Activated CD4-positive, alpha-beta T cell treated with anti-CD3 and anti-CD28 coated beads for 36 hours (primary cell): ENCODE measurements at regions of chr10 and their contacts with region 1.

Region 1: GRCh38 chr10:46030091-46030937 is at the start of gene NCOA4:
- DNase-seq: peak; percentile 98
- ATAC-seq: peak; percentile 96
- H3K4me3 Mint-ChIP-seq: peak within 1 kb of the TSS; percentile 97
- H3K27ac Mint-ChIP-seq: peak within 1 kb of the TSS; percentile 97
- H3K4me1 Mint-ChIP-seq: peaks cover 46% of the 10 kb centered on the region
- H3K27me3 Mint-ChIP-seq: no peaks in the 10 kb centered on the region
- total RNA-seq, gene NCOA4: 84.3 to 97.4 TPM

Region 2: DNA sequence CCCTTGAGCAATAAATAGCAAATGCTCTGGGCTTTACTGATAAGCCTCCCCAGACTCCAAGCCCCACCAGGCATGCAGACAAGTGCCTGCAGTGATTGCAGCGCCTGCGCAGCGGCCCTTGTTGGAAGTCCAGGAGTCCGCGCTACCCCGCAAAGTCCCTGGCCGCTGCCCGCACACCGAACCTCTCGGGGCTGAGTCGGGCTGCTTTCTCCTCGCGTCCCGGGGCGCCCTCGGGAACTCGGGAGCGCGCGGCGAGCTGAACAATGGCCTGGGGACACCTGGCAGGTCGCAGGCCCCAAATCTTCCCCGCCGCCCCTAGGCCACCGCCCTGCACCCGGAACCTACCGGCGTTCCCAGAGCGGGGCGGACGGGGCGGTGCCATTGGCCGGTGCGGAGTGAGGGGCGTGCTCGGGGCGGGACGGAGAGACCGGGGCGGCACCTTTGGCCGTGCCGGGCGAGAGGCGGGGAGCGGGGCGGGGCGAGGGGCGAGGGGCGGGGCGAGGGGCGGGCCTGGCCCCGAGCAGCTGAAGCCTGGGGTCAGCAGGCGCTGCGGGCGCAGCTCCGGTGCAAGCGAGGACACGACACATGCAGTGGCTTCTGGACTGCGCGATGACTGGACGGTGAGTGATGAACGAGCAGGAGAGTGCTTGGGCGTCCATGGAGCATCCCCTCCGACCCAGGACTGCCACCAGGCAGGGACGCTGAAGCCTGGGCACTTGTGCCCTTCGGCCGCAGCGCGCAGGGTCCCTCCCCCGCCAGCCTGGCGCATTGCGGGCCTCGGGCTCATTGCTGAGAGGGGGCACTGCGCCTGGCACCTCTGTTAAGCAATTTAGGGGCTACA is 1070.8 kb before region 1 on chr10 and contains the start of gene RASSF4:
- CTCF ChIA-PET with region 1: no interaction called
- POLR2A ChIA-PET with region 1: no interaction called
- intact Hi-C with region 1: loop called in 1 of 2 experiments (anchors 2 kb)
- DNase-seq: peak; percentile 96
- ATAC-seq: peak; percentile 100
- H3K4me3 Mint-ChIP-seq: peak within 1 kb of the TSS; percentile 80
- H3K27ac Mint-ChIP-seq: peak within 1 kb of the TSS; percentile 70
- H3K4me1 Mint-ChIP-seq: peaks cover 19% of the 10 kb centered on the region
- H3K27me3 Mint-ChIP-seq: no peaks in the 10 kb centered on the region
- total RNA-seq, gene RASSF4: 1.0 to 1.3 TPM

Region 3: GRCh38 chr10:45249978-45250693 is 780.2 kb before region 1 on chr10:
- CTCF ChIA-PET with region 1: no interaction called
- POLR2A ChIA-PET with region 1: no interaction called
- intact Hi-C with region 1: loop called in 1 of 2 experiments (anchors 2 kb)
- DNase-seq: no peak
- ATAC-seq: peak; percentile 26
- H3K4me3 Mint-ChIP-seq: peak overlapping the region; percentile 22
- H3K27ac Mint-ChIP-seq: no peak overlapping the region
- H3K4me1 Mint-ChIP-seq: peaks cover 2% of the 10 kb centered on the region
- H3K27me3 Mint-ChIP-seq: peaks cover 3% of the 10 kb centered on the region

Region 4: DNA sequence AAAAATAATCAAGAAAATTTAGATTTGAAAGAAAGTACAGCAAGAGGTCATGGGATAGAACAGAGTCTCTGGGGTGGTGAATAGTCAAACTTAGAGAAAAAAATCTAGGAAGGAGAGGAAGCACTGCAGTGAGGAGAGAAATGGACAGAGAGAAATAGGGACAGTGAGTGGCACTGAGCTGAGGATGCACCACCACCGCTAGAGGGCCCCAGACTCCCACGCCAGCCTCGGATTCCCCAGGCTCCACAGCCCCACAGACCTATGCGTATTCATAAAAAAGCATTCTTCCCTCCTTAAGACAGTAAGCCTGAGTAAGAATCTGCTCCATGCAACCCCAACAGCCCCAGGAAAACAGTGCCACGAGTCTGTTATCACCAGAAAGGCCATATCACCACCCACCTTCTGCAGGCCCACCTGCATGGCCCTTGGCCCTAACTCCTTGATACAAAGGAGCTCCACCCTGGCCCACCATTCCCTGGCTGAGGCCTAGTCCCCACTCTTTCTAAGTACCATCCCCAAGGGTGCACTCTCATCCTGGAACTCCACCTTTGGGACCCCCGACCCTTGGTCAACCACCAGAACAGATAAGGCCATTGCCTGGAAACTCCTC is 565.3 kb before region 1 on chr10:
- CTCF ChIA-PET with region 1: no interaction called
- POLR2A ChIA-PET with region 1: no interaction called
- intact Hi-C with region 1: loop called in 1 of 2 experiments (anchors 5 kb)
- DNase-seq: peak; percentile 89
- ATAC-seq: peak; percentile 100
- H3K4me3 Mint-ChIP-seq: no peak overlapping the region
- H3K27ac Mint-ChIP-seq: no peak overlapping the region
- H3K4me1 Mint-ChIP-seq: peaks cover 11% of the 10 kb centered on the region
- H3K27me3 Mint-ChIP-seq: no peaks in the 10 kb centered on the region

Region 5: DNA sequence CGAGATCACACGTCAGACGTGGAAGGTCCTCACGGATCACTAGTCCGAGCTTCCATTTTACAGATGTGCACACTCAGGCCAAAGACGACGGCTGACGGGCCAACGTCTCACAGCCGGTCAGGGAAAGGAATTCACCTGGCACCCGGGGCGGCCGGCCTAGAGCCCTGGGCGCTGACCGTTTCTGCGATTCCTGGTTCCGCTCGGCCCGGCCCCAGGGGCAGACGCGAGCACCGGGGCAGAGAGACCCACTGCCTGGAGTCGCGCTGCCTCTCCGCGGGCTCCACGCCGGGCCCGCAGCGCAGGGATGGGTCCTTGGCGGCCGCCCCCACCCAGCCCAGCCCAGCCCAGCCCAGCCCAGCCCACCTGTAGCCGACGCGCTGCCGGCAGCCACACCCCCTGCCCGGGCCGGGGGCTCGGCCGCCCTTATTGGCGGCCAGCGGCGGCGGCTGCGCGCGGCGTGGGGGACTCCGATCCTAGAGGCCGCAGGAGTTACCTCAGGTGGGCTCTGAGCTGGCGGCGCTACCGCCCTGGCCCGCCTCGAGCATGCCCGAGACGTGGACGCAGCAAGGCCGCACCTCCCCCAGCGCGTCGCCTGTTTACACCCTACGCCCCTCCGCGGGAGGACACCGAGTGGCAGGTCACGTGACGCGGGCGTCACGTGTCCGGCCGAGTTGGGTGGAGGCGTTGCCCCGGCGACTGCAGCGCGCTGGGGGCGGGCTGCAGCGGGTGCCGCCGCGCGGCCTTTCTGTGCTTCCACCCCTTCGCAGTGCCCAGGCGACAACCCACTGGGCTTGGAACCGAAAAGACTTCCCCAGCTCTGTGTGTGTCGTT is 435.8 kb before region 1 on chr10:
- CTCF ChIA-PET with region 1: no interaction called
- POLR2A ChIA-PET with region 1: no interaction called
- intact Hi-C with region 1: loop called in 1 of 2 experiments (anchors 2 kb)
- DNase-seq: peak; percentile 94
- ATAC-seq: peak; percentile 93
- H3K4me3 Mint-ChIP-seq: peak overlapping the region; percentile 77
- H3K27ac Mint-ChIP-seq: peak overlapping the region; percentile 67
- H3K4me1 Mint-ChIP-seq: peaks cover 30% of the 10 kb centered on the region
- H3K27me3 Mint-ChIP-seq: peaks cover 5% of the 10 kb centered on the region

Region 6: DNA sequence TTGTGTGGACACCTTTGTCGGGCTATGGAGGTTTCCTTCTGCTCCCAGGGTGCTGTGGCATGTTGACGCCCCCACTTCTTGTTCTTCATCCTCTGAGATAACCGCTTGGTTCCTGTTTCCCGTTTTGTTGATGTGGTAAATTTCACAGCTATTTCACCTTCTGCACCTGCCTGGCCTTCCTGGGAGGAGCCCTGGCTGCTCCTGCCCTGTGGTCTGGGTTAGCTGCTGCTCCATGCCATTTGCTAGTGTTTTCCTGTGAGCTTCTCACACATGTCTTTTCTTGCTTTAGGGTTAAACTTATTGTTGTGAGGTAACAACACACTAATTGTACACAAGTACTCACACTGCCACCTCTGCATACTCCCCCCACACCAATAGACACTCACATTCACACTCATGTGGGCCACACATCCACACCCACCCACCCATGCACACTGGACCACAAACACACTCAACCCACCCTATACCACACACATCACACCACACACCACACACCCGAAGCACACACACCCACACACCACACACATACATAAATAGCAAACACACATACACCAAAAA is 62.3 kb after region 1 on chr10:
- CTCF ChIA-PET with region 1: interaction called, 8 read pairs
- POLR2A ChIA-PET with region 1: no interaction called
- intact Hi-C with region 1: loop called (anchors 1 to 10 kb)
- DNase-seq: peak; percentile 25
- ATAC-seq: peak; percentile 13
- H3K4me3 Mint-ChIP-seq: no peak overlapping the region
- H3K27ac Mint-ChIP-seq: no peak overlapping the region
- H3K4me1 Mint-ChIP-seq: no peaks in the 10 kb centered on the region
- H3K27me3 Mint-ChIP-seq: no peaks in the 10 kb centered on the region

Region 7: GRCh38 chr10:46171661-46172060 is 141.3 kb after region 1 on chr10:
- CTCF ChIA-PET with region 1: no interaction called
- POLR2A ChIA-PET with region 1: no interaction called
- intact Hi-C with region 1: no loop called
- DNase-seq: no peak
- ATAC-seq: no peak
- H3K4me3 Mint-ChIP-seq: no peak overlapping the region
- H3K27ac Mint-ChIP-seq: no peak overlapping the region
- H3K4me1 Mint-ChIP-seq: no peaks in the 10 kb centered on the region
- H3K27me3 Mint-ChIP-seq: no peaks in the 10 kb centered on the region

Region 8: DNA sequence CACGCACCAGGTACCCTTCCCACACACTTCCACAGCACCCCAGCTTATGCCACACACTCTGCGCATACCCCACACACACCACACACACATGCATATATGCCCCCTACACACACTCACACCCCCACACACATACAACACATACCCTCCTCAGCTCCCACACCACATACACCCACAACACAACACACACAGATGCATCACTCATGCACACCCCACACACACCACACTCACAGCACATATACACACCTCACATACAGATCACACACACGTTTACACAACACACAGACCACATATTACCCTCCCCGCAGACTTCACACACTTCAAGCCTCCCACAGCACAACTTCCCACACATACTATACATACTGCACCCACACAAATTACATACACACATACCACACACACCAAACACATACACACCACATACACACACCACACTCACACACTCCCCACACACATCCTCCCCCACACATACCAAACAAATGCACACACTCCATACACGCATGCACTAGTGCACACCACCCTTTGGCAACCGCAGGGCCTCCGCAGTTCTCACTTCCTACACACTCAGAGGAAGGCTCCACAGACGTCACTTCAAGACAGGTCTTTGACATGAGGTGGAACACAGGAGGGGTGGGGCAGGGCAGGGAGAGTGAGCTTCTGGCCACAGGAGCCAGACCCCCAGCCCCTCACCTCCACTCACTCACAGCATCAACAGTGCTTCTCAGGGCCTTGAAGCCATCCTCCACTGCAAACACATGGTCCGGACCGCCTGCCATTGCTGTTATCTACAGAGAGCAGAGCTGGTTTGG is 238.0 kb after region 1 on chr10:
- CTCF ChIA-PET with region 1: no interaction called
- POLR2A ChIA-PET with region 1: no interaction called
- intact Hi-C with region 1: loop called in 1 of 2 experiments (anchors 5 kb)
- DNase-seq: peak; percentile 87
- ATAC-seq: peak; percentile 80
- H3K4me3 Mint-ChIP-seq: no peak overlapping the region
- H3K27ac Mint-ChIP-seq: no peak overlapping the region
- H3K4me1 Mint-ChIP-seq: peaks cover 25% of the 10 kb centered on the region
- H3K27me3 Mint-ChIP-seq: no peaks in the 10 kb centered on the region